Posterior cingulate gyrus (tissue), 11 donors: ENCODE measurements at regions of chr6 and their contacts with region 1.

Region 1: GRCh38 chr6:56491606-56492328 is 150.9 kb downstream of the DST start:
- DNase-seq: no peak

Region 2: DNA sequence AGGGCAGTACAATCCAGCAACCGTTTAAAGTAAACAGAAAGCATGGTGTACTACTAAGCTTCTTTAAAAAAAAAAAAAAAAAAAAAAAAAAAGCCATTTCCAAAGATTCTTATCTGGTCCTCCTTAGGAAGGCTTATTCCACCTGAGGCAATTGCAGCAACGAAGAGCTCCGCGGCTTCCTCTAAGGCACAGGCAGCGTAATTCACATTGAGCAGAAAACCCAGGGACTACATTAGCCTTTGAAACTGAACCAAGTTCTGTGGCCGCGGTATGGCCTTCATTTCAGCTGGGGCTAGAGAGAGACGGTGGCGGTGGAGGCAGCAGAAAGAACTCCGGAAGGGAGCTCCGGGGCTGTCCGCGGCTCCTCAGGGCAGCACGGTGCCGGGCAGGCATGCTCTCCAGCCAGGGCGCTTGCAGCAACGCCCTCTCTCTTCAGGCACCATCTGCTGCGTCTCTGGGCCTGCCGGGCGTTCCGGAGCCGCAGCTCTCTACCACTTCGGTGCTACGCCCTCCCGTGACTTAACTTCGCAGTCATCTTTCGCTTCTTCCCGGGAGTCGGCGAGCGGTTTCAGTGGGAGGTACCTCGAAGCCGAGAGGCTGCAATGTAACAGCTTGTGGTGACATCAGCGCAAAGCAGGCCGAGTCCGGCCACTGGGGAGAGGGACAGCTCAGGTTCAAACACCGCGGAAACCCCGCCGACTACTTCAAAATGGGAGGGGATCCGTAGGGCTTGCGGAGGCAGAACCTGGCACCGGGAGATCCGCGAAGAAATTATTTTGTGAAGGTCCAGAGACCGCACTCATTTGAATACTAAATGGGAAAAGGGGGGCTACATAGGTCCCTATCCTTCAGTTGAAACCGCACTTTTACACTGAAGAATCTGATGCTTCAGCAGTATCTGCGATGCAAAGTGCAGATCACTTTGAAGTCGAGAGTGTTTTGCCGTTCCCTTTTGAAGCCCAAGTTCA is 50.9 kb after region 1 on chr6:
- intact Hi-C with region 1: loop called (anchors 10 kb)
- DNase-seq: peak; percentile 66 to 97 (median 80)